ENCODE measurements at regions of chr10 and their contacts with region 1.

Region 1: DNA sequence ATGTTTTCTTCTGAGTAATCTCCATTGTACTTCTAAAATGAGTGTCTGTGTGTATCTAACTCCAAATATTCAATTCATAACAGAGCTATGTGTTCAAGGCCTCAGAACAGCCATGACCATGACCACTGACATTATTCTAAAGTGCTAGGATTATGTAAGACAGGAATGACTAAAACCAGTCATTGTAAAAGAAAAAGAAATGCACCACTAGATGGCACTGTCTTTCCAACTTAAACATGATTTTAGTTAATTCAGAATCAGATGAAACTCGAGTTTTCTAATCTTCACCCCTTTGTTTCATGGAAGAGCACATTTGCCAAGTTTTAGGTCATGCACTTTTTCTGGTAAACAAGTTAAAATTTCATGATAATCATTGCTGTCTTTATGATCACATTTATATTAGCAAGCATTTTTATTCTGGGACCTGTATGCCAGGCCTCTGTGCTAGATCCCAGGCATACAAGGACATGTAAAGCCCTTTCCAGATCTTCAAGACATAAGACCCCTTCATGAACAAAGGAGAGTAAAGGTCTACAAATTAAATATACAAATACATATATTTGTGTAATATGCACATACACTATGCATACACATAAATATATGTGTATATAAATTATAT is 26.1 kb upstream of the RSU1 start:
- DNase-seq: peak in 7 of 9 donors; percentile 44 to 71 (median 63)
- ATAC-seq: peak; percentile 86
- H3K4me3 ChIP-seq: no peak overlapping the region
- H3K4me3 Mint-ChIP-seq: no peak overlapping the region
- H3K27ac ChIP-seq: no peak overlapping the region
- H3K27ac Mint-ChIP-seq: peak overlapping the region in 5 of 9 donors; percentile 18 to 43 (median 34)
- H3K4me1 ChIP-seq: no peaks in the 10 kb centered on the region
- H3K4me1 Mint-ChIP-seq: peaks cover 0 to 9% (median 3%) of the 10 kb centered on the region in 7 donors
- H3K27me3 ChIP-seq: no peaks in the 10 kb centered on the region
- H3K27me3 Mint-ChIP-seq: peaks cover 0 to 2% (median 0%) of the 10 kb centered on the region in 5 donors

Region 2: GRCh38 chr10:15120523-15120922 is 1722.8 kb before region 1 on chr10:
- CTCF ChIA-PET with region 1: no interaction called
- POLR2A ChIA-PET with region 1: no interaction called
- intact Hi-C with region 1: no loop called
- DNase-seq: no peak
- ATAC-seq: no peak
- H3K4me3 ChIP-seq: no peak overlapping the region
- H3K4me3 Mint-ChIP-seq: no peak overlapping the region
- H3K27ac ChIP-seq: no peak overlapping the region
- H3K27ac Mint-ChIP-seq: no peak overlapping the region
- H3K4me1 ChIP-seq: no peaks in the 10 kb centered on the region
- H3K4me1 Mint-ChIP-seq: peaks cover 0 to 32% (median 6%) of the 10 kb centered on the region in 7 donors
- H3K27me3 ChIP-seq: no peaks in the 10 kb centered on the region
- H3K27me3 Mint-ChIP-seq: no peaks in the 10 kb centered on the region

Region 3: DNA sequence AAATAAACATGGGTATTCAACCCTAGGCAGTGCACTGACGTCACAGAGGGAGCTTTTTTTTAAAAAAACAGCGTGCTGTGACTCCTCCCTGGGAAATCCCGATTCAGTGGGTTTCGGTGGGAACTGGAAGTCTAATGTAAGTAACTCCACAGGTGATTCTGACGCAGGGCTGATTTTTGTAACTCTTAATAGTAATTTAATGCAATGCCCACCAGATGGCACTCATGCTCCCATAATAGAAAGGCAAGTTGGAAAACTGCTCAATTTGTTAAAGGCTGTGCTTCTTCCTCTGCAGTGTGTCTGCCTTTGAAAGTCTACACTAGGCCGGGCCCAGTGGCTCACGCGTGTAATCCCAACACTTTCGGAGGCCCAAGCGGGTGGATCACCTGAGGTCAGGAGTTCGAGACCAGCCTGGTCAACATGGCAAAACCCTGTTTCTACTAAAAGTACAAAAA is 15.2 kb before region 1 on chr10:
- CTCF ChIA-PET with region 1: interaction called, 6 read pairs
- POLR2A ChIA-PET with region 1: interaction called, 6 read pairs
- intact Hi-C with region 1: loop called (anchors 1 kb)
- DNase-seq: peak; percentile 22 to 78 (median 69)
- ATAC-seq: peak; percentile 96
- H3K4me3 ChIP-seq: no peak overlapping the region
- H3K4me3 Mint-ChIP-seq: no peak overlapping the region
- H3K27ac ChIP-seq: no peak overlapping the region
- H3K27ac Mint-ChIP-seq: peak overlapping the region in 3 of 9 donors; percentile 63 to 84 (median 82)
- H3K4me1 ChIP-seq: no peaks in the 10 kb centered on the region
- H3K4me1 Mint-ChIP-seq: peaks cover 0 to 12% (median 8%) of the 10 kb centered on the region in 7 donors
- H3K27me3 ChIP-seq: no peaks in the 10 kb centered on the region
- H3K27me3 Mint-ChIP-seq: peaks cover 0 to 9% (median 0%) of the 10 kb centered on the region in 5 donors

Region 4: GRCh38 chr10:17249820-17250219 is 406.5 kb after region 1 on chr10:
- CTCF ChIA-PET with region 1: interaction called, 8 read pairs
- POLR2A ChIA-PET with region 1: no interaction called
- intact Hi-C with region 1: loop called (anchors 1 kb)
- DNase-seq: peak in 4 of 9 donors; percentile 26 to 39 (median 28)
- ATAC-seq: peak; percentile 47
- H3K4me3 ChIP-seq: no peak overlapping the region
- H3K4me3 Mint-ChIP-seq: no peak overlapping the region
- H3K27ac ChIP-seq: no peak overlapping the region
- H3K27ac Mint-ChIP-seq: no peak overlapping the region
- H3K4me1 ChIP-seq: no peaks in the 10 kb centered on the region
- H3K4me1 Mint-ChIP-seq: peaks cover 0 to 4% (median 0%) of the 10 kb centered on the region in 7 donors
- H3K27me3 ChIP-seq: no peaks in the 10 kb centered on the region
- H3K27me3 Mint-ChIP-seq: peaks cover 0 to 5% (median 0%) of the 10 kb centered on the region in 5 donors

Region 5: DNA sequence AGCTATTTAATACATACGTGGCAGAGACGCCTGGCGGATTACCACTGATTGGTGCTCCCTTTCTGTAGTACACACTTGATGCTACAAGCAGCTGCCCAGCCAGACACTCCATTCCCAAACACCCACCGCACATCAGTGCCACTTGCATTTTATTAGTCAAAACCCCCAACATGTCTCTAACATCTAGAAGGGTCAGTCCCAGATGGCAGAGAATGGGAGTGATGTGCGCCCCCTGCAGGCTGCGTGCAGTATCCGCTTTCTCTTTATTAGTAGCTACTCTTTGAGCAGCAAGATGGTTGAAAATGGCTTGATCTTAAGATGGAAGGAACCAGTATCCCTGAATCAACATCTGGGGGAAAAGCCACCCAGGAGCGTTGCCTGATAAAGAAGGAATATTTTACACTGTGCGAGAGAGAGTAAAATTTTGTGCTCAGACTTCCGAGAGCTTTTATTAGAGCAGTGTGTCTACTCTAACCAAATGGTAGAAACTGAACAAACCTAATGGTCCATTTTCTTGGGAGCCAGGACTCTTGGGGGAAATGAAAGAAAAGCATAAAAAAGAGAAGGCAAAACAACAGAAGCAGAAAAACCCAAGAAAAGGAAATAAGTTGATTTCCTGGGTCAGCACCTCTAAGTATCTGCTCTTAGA is 532.7 kb after region 1 on chr10:
- CTCF ChIA-PET with region 1: no interaction called
- POLR2A ChIA-PET with region 1: no interaction called
- intact Hi-C with region 1: loop called in 1 of 2 experiments (anchors 5 kb)
- DNase-seq: peak in 1 of 9 donors; percentile 2
- ATAC-seq: no peak
- H3K4me3 ChIP-seq: no peak overlapping the region
- H3K4me3 Mint-ChIP-seq: no peak overlapping the region
- H3K27ac ChIP-seq: no peak overlapping the region
- H3K27ac Mint-ChIP-seq: no peak overlapping the region
- H3K4me1 ChIP-seq: no peaks in the 10 kb centered on the region
- H3K4me1 Mint-ChIP-seq: no peaks in the 10 kb centered on the region
- H3K27me3 ChIP-seq: no peaks in the 10 kb centered on the region
- H3K27me3 Mint-ChIP-seq: no peaks in the 10 kb centered on the region

Region 6: GRCh38 chr10:17673456-17674061 is 830.2 kb after region 1 on chr10:
- CTCF ChIA-PET with region 1: no interaction called
- POLR2A ChIA-PET with region 1: no interaction called
- intact Hi-C with region 1: no loop called
- DNase-seq: no peak
- ATAC-seq: peak; percentile 31
- H3K4me3 ChIP-seq: no peak overlapping the region
- H3K4me3 Mint-ChIP-seq: no peak overlapping the region
- H3K27ac ChIP-seq: no peak overlapping the region
- H3K27ac Mint-ChIP-seq: peak overlapping the region in 2 of 9 donors; percentile 14 to 53
- H3K4me1 ChIP-seq: peaks cover 4% of the 10 kb centered on the region in 2 donors
- H3K4me1 Mint-ChIP-seq: peaks cover 24 to 61% (median 44%) of the 10 kb centered on the region in 7 donors
- H3K27me3 ChIP-seq: no peaks in the 10 kb centered on the region
- H3K27me3 Mint-ChIP-seq: no peaks in the 10 kb centered on the region